Activated CD8-positive, alpha-beta T cell treated with anti-CD3 and anti-CD28 coated beads, Interleukin-2, amount 10 ng/mL, durations not matched to agents 7 days and 5 days (primary cell): ENCODE measurements at regions of chr22 and their contacts with region 1.

Region 1: DNA sequence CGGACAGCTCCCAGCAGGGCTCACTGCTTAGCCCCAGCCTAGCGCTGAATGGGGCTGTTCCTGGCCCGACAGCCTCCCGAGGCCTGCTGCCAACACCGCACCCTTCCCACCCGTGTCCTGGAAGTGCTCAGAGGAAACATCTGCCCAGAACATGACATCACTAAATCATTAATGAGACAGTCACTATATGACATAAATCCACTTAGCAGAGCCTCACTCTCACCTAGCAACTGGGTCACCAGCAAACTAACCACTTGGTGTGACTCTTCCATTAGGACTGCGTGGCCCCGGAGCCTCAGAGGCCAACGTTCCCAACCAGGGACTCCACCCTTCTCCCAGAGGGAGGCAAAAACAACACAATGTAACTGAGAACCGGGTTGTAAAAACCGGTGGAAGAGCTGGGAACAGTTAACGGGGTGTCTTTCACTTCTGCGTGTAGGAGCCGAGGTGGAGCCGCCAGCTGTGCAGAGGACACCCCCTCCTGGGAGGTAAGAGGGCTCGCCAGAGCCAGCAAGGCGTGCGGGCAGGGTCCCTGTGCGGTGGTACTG is 21.4 kb upstream of the PACSIN2 start:
- DNase-seq: no peak
- ATAC-seq: no peak
- H3K4me3 Mint-ChIP-seq: no peak overlapping the region
- H3K27ac Mint-ChIP-seq: no peak overlapping the region
- H3K4me1 Mint-ChIP-seq: no peaks in the 10 kb centered on the region
- H3K27me3 Mint-ChIP-seq: peaks cover 2% of the 10 kb centered on the region

Region 2: DNA sequence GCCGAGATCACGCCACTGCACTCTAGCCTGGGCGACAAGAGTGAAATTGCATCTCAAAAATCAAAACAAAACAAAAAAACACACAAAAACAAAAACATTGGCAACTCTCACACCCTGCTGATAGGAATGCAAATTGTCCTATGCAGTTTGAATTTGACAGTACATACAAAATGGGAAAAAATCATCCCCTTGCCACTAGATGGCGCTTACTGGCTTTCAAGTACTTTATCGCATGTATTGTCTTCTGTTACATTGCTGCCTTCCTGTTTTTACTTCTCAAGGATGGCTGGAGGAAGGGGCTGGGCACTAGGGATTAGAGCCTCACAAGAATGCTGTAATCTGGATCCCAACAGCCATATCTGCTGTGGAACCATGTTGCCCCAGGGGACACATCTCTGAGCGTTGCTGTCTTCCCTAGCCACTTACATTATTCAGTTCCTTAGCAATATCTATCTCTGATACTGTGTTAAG is 256.3 kb before region 1 on chr22:
- CTCF ChIA-PET with region 1: interaction called, 11 read pairs
- POLR2A ChIA-PET with region 1: no interaction called
- DNase-seq: peak; percentile 78
- ATAC-seq: peak; percentile 79
- H3K4me3 Mint-ChIP-seq: no peak overlapping the region
- H3K27ac Mint-ChIP-seq: no peak overlapping the region
- H3K4me1 Mint-ChIP-seq: no peaks in the 10 kb centered on the region
- H3K27me3 Mint-ChIP-seq: no peaks in the 10 kb centered on the region

Region 3: GRCh38 chr22:42868751-42869251 is 167.6 kb before region 1 on chr22:
- CTCF ChIA-PET with region 1: interaction called, 16 read pairs
- POLR2A ChIA-PET with region 1: no interaction called
- DNase-seq: no peak
- ATAC-seq: no peak
- H3K4me3 Mint-ChIP-seq: no peak overlapping the region
- H3K27ac Mint-ChIP-seq: no peak overlapping the region
- H3K4me1 Mint-ChIP-seq: peaks cover 6% of the 10 kb centered on the region
- H3K27me3 Mint-ChIP-seq: no peaks in the 10 kb centered on the region

Region 4: DNA sequence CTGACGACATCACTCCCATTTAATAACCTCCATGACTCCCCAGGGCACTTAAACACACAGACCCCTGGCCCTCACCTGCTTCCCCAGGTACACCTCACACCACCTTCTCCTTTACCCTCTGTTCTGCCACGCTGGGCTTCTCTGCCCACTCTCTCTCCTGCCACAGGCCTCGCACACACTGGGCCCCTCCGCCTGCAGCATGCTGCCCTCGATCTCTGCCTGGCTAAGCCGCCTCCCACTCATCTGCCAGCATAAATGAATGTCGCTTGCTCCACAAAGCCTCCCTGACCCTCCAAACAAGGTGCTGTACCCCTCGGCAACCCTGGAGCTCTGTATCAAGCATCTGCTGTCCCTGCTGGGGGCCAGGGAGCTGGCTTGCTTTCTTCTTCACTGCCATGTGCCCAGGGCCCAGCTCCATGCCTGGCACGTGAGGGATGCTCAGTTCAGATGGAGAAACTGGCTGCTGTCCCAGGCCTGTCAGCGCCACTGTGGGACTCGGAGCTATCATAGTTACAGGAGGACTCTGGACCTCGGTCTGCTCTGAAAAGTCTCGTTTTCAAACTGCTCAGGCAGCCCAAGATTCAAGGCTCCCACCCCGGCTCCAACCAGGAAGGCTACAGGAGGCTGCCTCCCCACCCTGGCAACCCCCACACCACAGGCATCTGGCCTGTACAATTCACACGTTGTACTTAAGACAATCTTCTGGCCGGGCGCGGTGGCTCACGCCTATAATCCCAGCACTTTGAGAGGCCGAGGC is 40.9 kb after region 1 on chr22:
- CTCF ChIA-PET with region 1: no interaction called
- POLR2A ChIA-PET with region 1: no interaction called
- DNase-seq: no peak
- ATAC-seq: no peak
- H3K4me3 Mint-ChIP-seq: no peak overlapping the region
- H3K27ac Mint-ChIP-seq: no peak overlapping the region
- H3K4me1 Mint-ChIP-seq: no peaks in the 10 kb centered on the region
- H3K27me3 Mint-ChIP-seq: no peaks in the 10 kb centered on the region